Natural killer cell (primary cell): ENCODE measurements at regions of chr9 and their contacts with region 1.

Region 1: DNA sequence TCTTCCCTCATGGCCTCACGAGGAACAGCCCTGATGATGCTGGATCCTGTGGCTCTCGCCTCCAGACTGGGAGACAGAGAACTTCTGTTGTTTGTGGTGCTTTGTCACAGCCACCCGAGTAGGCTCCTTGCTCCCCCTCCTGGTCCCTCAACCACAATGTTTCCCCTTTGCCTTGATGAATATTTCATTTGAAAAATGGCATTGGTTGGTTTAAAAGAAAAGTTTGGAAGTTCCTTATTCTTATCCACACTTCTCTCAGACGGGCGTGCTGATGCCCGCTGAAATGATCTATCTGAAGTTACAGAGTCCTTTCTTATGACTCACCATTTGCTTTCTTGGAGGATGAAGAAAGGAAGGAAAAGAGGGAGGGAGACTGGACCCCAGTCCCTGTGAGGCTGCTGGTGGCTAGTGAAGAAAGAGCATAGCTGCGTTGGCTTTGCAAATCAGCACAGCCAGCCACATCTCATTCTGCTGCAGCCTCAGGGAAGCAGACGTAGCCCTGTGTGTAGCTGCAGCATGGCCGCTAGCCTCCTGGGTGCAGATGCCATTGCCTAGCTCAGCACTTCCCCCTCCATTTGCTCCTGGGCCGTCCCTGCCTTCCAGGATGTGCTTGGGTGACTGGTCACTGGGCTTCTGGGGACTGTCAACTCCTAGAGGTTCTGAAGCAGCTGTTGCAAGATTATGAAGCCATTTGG is 185.9 kb downstream of the ERCC6L2 start:
- DNase-seq: peak; percentile 33 to 64
- ATAC-seq: peak; percentile 38 to 72 (median 43)
- H3K4me3 ChIP-seq: no peak overlapping the region
- H3K4me3 Mint-ChIP-seq: no peak overlapping the region
- H3K27ac ChIP-seq: no peak overlapping the region
- H3K27ac Mint-ChIP-seq: no peak overlapping the region
- H3K4me1 ChIP-seq: peaks cover 9% of the 10 kb centered on the region
- H3K4me1 Mint-ChIP-seq: peaks cover 22 to 27% of the 10 kb centered on the region in 2 donors
- H3K27me3 ChIP-seq: no peaks in the 10 kb centered on the region
- H3K27me3 Mint-ChIP-seq: peaks cover 6 to 12% of the 10 kb centered on the region in 2 donors
- CTCF ChIP-seq: peak; percentile 54

Region 2: GRCh38 chr9:95379630-95380029 is 681.8 kb before region 1 on chr9:
- intact Hi-C with region 1: loop called (anchors 5 kb)
- DNase-seq: peak in 1 of 2 donors; percentile 62
- ATAC-seq: no peak
- H3K4me3 ChIP-seq: no peak overlapping the region
- H3K4me3 Mint-ChIP-seq: no peak overlapping the region
- H3K27ac ChIP-seq: no peak overlapping the region
- H3K27ac Mint-ChIP-seq: no peak overlapping the region
- H3K4me1 ChIP-seq: no peaks in the 10 kb centered on the region
- H3K4me1 Mint-ChIP-seq: no peaks in the 10 kb centered on the region
- H3K27me3 ChIP-seq: peaks cover 17% of the 10 kb centered on the region
- H3K27me3 Mint-ChIP-seq: peaks cover 37 to 60% of the 10 kb centered on the region in 2 donors
- CTCF ChIP-seq: no peak

Region 3: DNA sequence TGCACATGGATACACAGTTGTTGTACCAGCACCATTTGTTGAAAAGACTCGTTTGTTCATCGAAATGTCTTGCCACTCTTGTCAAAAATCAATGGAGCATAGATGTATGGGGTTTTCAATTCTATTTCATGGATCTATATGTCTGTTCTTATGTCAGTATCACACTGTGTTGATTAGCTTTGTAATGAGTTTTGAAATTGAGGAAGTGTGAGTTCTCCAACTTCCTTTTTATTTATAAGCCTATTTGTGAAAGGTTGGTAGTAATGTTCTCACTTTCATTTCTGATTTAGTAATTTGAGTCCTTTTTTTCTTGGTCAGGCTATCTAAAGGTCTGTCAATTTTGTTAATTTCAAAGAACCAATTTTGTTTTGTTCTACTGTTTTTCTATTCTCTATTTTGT is 690.4 kb after region 1 on chr9:
- intact Hi-C with region 1: no loop called
- DNase-seq: no peak
- ATAC-seq: no peak
- H3K4me3 ChIP-seq: no peak overlapping the region
- H3K4me3 Mint-ChIP-seq: no peak overlapping the region
- H3K27ac ChIP-seq: no peak overlapping the region
- H3K27ac Mint-ChIP-seq: no peak overlapping the region
- H3K4me1 ChIP-seq: no peaks in the 10 kb centered on the region
- H3K4me1 Mint-ChIP-seq: no peaks in the 10 kb centered on the region
- H3K27me3 ChIP-seq: no peaks in the 10 kb centered on the region
- H3K27me3 Mint-ChIP-seq: no peaks in the 10 kb centered on the region
- CTCF ChIP-seq: no peak